OCI-LY7 (cell line): ENCODE measurements at regions of chr1 and their contacts with region 1.

Region 1: DNA sequence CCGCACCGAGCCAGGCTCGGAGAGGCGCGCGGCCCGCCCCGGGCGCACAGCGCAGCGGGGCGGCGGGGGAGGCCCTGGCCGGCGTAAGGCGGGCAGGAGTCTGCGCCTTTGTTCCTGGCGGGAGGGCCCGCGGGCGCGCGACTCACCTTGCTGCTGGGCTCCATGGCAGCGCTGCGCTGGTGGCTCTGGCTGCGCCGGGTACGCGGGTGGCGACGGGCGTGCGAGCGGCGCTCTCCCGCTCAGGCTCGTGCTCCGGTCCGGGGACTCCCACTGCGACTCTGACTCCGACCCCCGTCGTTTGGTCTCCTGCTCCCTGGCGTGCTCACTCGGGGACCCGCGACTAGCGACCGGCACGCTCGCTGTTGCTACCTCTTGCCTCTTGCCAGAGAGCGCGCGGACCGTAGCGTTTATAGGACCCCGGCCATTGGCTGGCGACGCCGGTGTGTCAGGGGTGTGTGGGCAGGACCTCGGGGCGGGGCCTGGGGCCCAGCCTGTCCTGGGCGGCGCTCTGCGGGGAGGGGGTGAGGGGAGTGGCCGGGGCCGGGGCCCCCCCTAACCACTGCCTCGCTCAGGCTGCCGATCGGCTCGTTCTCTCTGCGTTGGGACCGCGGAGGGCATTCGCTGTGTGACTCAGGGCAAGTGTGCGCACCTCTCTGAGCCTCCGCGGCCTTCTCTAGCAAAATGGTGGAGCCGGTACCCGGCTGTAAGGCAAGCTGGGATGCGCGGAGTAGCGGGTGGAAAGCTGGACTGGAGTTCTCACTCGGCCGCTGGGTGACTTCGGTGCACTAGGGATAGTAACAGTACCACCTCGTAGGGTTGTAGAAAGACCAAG is at the start of gene SLC2A1:
- DNase-seq: peak; percentile 96
- H3K4me3 ChIP-seq: peak within 1 kb of the TSS; percentile 91
- H3K27ac ChIP-seq: peak within 1 kb of the TSS; percentile 66
- H3K4me1 ChIP-seq: peaks cover 72% of the 10 kb centered on the region
- CTCF ChIP-seq: no peak
- total RNA-seq, gene SLC2A1: 45.7 and 66.6 TPM in 2 replicates

Region 2: DNA sequence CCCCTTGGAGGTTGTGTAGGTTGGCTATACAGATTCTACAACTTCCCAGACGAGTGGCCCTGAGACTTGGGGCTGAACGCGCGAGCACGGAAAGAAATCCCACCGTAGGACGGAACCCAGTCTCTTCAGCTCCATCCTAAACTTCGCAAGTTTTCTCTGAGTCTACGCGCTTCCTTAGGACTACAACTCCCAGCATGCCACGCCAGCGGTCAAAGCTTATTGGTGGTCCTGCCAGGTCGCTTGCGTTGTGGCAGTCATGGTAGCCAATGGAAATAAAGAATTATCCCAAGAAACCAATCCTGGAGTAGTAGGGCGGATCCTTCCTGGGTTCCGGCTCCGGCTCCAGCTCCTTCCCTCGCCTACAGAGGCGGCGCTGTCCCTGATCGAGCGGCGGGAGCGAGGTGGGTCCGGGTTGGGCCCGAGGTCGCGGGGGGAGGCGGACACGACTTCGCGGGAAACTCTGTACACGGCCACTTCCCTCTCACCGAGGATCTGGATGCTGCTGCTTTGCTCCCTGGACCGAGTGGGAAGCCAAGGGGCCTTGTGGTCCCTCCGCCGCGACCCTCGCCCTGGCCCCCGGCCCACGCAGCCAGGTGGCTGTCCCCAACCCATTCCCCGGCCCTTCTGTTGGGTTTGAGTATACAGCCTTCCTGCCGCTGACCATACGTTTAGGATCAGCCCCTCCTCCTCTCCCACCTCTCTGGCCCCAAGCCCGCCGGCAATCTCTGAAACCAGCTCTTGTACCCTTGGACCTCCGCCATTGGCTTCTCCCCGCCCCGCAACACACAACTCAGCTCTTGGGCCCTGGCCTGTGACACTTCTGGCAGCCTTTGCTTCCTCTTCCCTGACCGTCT is 112.2 kb before region 1 on chr1 and contains the start of gene ZNF691:
- CTCF ChIA-PET with region 1: no interaction called
- POLR2A ChIA-PET with region 1: interaction called, 3 read pairs
- intact Hi-C with region 1: loop called (anchors 1 kb)
- DNase-seq: peak; percentile 97
- H3K4me3 ChIP-seq: peak within 1 kb of the TSS; percentile 89
- H3K27ac ChIP-seq: peak within 1 kb of the TSS; percentile 73
- H3K4me1 ChIP-seq: peaks cover 48% of the 10 kb centered on the region
- CTCF ChIP-seq: peak; percentile 59
- total RNA-seq, gene ZNF691: 14.1 and 17.8 TPM in 2 replicates

Region 3: GRCh38 chr1:42924082-42924850 is 34.4 kb before region 1 on chr1:
- CTCF ChIA-PET with region 1: no interaction called
- POLR2A ChIA-PET with region 1: interaction called, 5 read pairs
- intact Hi-C with region 1: loop called (anchors 5 kb)
- DNase-seq: peak; percentile 89
- H3K4me3 ChIP-seq: peak overlapping the region; percentile 69
- H3K27ac ChIP-seq: peak overlapping the region; percentile 31
- H3K4me1 ChIP-seq: peaks cover 24% of the 10 kb centered on the region
- CTCF ChIP-seq: peak; percentile 45

Region 4: GRCh38 chr1:42931108-42931539 is 27.6 kb before region 1 on chr1:
- CTCF ChIA-PET with region 1: interaction called, 3 read pairs
- POLR2A ChIA-PET with region 1: interaction called, 16 read pairs
- intact Hi-C with region 1: loop called (anchors 1 kb)
- DNase-seq: peak; percentile 64
- H3K4me3 ChIP-seq: peak overlapping the region; percentile 41
- H3K27ac ChIP-seq: peak overlapping the region; percentile 91
- H3K4me1 ChIP-seq: peaks cover 55% of the 10 kb centered on the region
- CTCF ChIP-seq: peak; percentile 77

Region 5: DNA sequence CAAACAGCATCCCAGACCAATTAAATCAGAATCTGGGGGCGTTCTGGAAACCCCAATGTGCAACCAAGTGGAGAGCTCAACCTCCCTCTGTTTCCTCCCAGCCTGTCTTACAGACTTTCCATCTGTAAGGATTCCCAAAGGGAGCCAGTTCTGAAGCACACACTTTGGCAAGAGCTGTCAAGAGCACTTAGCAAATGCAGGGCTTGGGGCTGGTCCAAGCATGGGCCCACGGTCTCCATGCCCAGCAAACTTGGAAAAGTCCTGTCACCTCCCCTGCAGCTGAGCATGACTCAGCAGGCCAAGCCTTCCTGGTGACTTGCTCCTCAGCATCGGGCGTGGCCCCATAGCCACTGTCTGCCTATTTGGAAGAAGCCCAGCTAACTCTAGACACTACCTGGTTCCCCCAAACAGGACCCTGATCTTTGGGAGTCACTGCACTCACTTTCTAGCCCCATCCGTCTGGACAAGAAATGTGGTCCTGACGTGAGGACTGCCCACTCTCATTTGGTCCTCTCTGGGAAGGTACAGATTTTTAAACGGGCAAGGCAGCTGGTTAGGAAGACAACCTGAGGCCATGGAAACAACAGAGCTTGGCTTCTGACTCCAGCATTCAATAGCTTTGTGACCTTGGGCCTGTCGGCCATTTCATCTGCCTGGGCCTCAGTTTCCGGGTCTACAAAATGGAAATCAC is 16.9 kb before region 1 on chr1:
- CTCF ChIA-PET with region 1: interaction called, 7 read pairs
- POLR2A ChIA-PET with region 1: interaction called, 16 read pairs
- intact Hi-C with region 1: loop called (anchors 2 kb)
- DNase-seq: no peak
- H3K4me3 ChIP-seq: peak overlapping the region; percentile 15
- H3K27ac ChIP-seq: peak overlapping the region; percentile 93
- H3K4me1 ChIP-seq: peaks cover 84% of the 10 kb centered on the region
- CTCF ChIP-seq: no peak